MCF 10A (cell line): ENCODE measurements at regions of chr1 and their contacts with region 1.

Region 1: DNA sequence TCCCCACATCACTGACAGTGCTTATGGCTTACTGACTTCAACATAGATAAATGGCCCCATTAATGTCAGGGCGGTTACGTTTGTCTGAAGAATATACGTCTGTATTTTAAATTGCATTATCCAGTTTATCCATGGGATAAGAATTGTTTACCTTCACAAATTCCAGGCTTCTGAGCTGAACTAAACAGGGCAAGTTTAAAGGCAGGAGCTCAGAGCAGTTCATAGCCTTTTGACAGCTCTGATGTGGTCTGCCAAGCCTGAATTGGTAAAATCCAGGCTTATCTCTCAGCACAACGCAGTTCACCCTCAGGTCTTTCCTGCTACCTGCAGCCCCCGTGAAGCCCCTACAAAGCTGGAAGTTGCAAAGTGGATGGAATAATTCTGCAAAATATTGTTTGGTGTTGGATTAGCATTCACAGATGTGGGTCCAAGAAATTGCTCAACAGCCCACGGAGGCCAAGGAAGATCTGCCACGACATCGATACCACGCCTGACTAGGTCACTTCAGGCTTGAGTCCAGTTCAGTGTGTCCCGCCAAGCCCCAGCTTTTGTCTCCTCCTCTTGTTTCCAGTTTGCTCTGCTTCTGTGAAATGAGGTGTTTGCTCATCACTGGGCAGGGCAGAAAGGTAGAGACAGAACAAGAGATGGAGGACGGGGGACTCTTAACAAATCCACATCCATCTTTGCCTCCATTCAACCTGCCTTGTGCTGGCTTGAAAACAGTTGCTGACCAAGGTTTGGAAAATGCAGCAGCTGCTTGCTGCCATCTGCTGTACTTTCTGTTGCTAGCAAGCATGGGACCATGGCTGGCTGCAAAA is 79.8 kb upstream of the GREM2 start:
- DNase-seq: peak; percentile 71
- H3K4me3 Mint-ChIP-seq: no peak overlapping the region
- H3K27ac Mint-ChIP-seq: no peak overlapping the region
- H3K4me1 Mint-ChIP-seq: no peaks in the 10 kb centered on the region
- H3K27me3 Mint-ChIP-seq: no peaks in the 10 kb centered on the region
- CTCF ChIP-seq: peak; percentile 98

Region 2: GRCh38 chr1:238960071-238960470 is 1731.7 kb before region 1 on chr1:
- CTCF ChIA-PET with region 1: no interaction called
- POLR2A ChIA-PET with region 1: no interaction called
- intact Hi-C with region 1: no loop called
- DNase-seq: peak; percentile 100
- H3K4me3 Mint-ChIP-seq: peak overlapping the region; percentile 34
- H3K27ac Mint-ChIP-seq: peak overlapping the region; percentile 17
- H3K4me1 Mint-ChIP-seq: peaks cover 38% of the 10 kb centered on the region
- H3K27me3 Mint-ChIP-seq: no peaks in the 10 kb centered on the region
- CTCF ChIP-seq: no peak

Region 3: DNA sequence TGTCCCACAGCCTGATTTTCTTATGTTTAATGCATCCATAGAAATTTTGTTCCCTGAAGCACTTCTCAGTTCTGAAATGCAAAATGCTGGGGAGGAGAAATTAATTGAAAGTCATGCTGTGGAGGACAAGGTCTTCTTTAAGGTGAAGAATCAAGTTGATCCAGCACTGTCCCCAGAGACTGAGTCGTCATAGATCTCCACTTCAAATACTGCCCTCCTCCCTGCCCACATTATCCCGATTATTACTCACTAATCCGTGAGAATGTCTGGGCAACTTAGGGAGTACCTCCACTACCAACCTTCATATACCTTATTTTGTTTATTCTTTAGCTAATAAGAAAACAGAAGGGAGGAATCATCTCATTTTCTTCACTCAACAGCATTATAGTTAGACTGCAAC is 670.0 kb before region 1 on chr1:
- CTCF ChIA-PET with region 1: interaction called, 17 read pairs
- POLR2A ChIA-PET with region 1: no interaction called
- intact Hi-C with region 1: no loop called
- DNase-seq: no peak
- H3K4me3 Mint-ChIP-seq: no peak overlapping the region
- H3K27ac Mint-ChIP-seq: no peak overlapping the region
- H3K4me1 Mint-ChIP-seq: peaks cover under 1% of the 10 kb centered on the region
- H3K27me3 Mint-ChIP-seq: no peaks in the 10 kb centered on the region
- CTCF ChIP-seq: no peak

Region 4: GRCh38 chr1:240169188-240169587 is 522.5 kb before region 1 on chr1:
- CTCF ChIA-PET with region 1: interaction called, 26 read pairs
- POLR2A ChIA-PET with region 1: no interaction called
- intact Hi-C with region 1: no loop called
- DNase-seq: peak; percentile 59
- H3K4me3 Mint-ChIP-seq: no peak overlapping the region
- H3K27ac Mint-ChIP-seq: no peak overlapping the region
- H3K4me1 Mint-ChIP-seq: no peaks in the 10 kb centered on the region
- H3K27me3 Mint-ChIP-seq: no peaks in the 10 kb centered on the region
- CTCF ChIP-seq: peak; percentile 61

Region 5: DNA sequence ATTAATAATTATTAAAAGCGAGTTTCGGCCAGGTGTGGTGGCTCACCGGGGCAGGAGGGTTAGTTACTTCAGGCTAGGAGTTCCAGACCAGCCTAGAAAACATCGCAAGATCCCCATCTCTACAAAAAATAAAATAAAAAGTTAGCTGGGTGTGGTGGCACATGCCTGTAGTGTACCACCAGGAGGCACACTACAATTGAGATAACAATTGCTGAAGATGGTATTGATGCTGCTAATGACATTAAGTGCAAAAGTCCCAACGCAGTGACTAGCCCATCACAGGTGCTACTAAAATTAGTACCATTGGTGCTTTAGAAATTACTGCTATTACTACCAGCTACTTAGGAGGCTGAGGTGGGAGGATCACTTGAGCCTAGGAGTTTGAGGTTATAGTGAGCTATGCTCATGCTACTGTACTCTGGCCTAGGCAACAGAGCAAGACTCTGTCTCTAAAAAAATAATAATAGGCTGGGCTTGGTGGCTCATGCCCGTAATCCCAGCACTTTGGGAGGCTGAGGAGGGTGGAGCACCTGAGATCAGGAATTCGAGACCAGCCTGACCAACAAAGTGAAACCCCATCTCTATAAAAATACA is 236.4 kb before region 1 on chr1:
- CTCF ChIA-PET with region 1: interaction called, 53 read pairs
- POLR2A ChIA-PET with region 1: no interaction called
- intact Hi-C with region 1: loop called (anchors 1 kb)
- DNase-seq: peak; percentile 65
- H3K4me3 Mint-ChIP-seq: no peak overlapping the region
- H3K27ac Mint-ChIP-seq: no peak overlapping the region
- H3K4me1 Mint-ChIP-seq: no peaks in the 10 kb centered on the region
- H3K27me3 Mint-ChIP-seq: no peaks in the 10 kb centered on the region
- CTCF ChIP-seq: peak; percentile 38

Region 6: DNA sequence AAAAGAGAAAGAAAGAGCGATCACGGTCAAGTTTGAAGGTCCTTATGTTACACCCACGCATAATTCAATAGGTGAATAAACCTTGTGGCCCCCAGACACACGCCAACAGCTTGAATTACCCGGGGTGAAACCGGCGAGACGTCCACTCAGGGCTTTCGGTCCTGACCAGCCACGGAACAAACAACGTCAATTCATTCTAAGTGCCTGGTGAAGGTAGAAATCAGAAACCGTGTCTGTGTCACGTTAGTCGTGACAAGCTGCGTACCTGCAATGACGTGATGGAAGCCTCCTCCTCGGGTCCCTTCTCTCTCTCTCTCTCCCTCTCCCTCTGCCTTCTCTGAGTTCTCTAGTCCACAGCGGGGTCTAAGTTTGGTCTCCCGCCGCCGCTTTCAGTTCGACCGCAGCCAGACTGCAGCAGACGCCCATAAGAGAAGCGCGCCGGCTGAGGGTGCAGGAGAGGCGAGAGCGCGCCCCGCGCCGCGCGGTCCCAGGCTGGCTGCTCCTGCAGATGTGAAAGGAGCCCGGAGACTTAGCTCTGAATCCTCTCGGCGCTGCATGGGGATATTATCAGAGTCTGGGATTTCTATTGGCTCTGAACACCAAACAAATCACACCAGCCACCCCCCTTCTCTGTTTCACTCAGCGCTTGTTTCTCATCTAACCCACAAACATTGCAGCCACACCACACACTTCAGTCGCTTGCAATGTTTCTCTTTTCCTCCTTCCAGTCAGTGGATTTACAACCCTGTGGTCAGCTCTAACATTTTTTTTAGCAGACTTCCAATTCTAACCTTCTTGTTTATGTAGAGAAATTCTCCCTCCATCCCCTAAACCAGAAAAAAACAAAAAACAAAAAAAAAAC is 79.9 kb before region 1 on chr1 and contains the start of gene GREM2:
- CTCF ChIA-PET with region 1: interaction called, 48 read pairs
- POLR2A ChIA-PET with region 1: interaction called, 5 read pairs
- intact Hi-C with region 1: loop called (anchors 1 kb)
- DNase-seq: peak; percentile 72
- H3K4me3 Mint-ChIP-seq: peak within 1 kb of the TSS; percentile 86
- H3K27ac Mint-ChIP-seq: peak within 1 kb of the TSS; percentile 59
- H3K4me1 Mint-ChIP-seq: peaks cover 15% of the 10 kb centered on the region
- H3K27me3 Mint-ChIP-seq: no peaks in the 10 kb centered on the region
- CTCF ChIP-seq: no peak
- total RNA-seq, gene GREM2: 0.10 TPM in 1 of 2 replicates, not detected in the other

Region 7: GRCh38 chr1:240663160-240663879 is 28.4 kb before region 1 on chr1:
- CTCF ChIA-PET with region 1: interaction called, 15 read pairs
- POLR2A ChIA-PET with region 1: no interaction called
- intact Hi-C with region 1: no loop called
- DNase-seq: no peak
- H3K4me3 Mint-ChIP-seq: no peak overlapping the region
- H3K27ac Mint-ChIP-seq: no peak overlapping the region
- H3K4me1 Mint-ChIP-seq: no peaks in the 10 kb centered on the region
- H3K27me3 Mint-ChIP-seq: no peaks in the 10 kb centered on the region
- CTCF ChIP-seq: no peak